ENCODE measurements at regions of chr1 and their contacts with region 1.

Region 1: GRCh38 chr1:234722904-234723720 is 113.1 kb upstream of the IRF2BP2 start:
- DNase-seq: peak in 30 of 35 experiments; percentile 11 to 67 (median 32)
- ATAC-seq: peak; percentile 0 to 40 (median 36)
- H3K4me3 ChIP-seq: peak overlapping the region; percentile 7 to 23
- H3K4me3 Mint-ChIP-seq: peak overlapping the region; percentile 67 to 76 (median 68)
- H3K27ac ChIP-seq: peak overlapping the region; percentile 98
- H3K27ac Mint-ChIP-seq: peak overlapping the region; percentile 92 to 97
- H3K4me1 ChIP-seq: peaks cover 24 to 54% of the 10 kb centered on the region in 2 experiments
- H3K4me1 Mint-ChIP-seq: peaks cover 68 to 81% (median 70%) of the 10 kb centered on the region in 3 donors
- H3K27me3 ChIP-seq: no peaks in the 10 kb centered on the region
- H3K27me3 Mint-ChIP-seq: no peaks in the 10 kb centered on the region

Region 2: GRCh38 chr1:234599617-234600417 is 123.3 kb before region 1 on chr1:
- CTCF ChIA-PET with region 1: interaction called in 1 of 2 experiments, 12 read pairs
- POLR2A ChIA-PET with region 1: interaction called, 9 to 17 read pairs
- DNase-seq: peak; percentile 35 to 88 (median 73)
- ATAC-seq: peak; percentile 65 to 78 (median 76)
- H3K4me3 ChIP-seq: peak overlapping the region; percentile 53 to 62
- H3K4me3 Mint-ChIP-seq: peak overlapping the region; percentile 82 to 94 (median 88)
- H3K27ac ChIP-seq: peak overlapping the region; percentile 96
- H3K27ac Mint-ChIP-seq: peak overlapping the region; percentile 91 to 93
- H3K4me1 ChIP-seq: peaks cover 38 to 53% of the 10 kb centered on the region in 2 experiments
- H3K4me1 Mint-ChIP-seq: peaks cover 45 to 60% (median 60%) of the 10 kb centered on the region in 3 donors
- H3K27me3 ChIP-seq: no peaks in the 10 kb centered on the region
- H3K27me3 Mint-ChIP-seq: no peaks in the 10 kb centered on the region

Region 3: DNA sequence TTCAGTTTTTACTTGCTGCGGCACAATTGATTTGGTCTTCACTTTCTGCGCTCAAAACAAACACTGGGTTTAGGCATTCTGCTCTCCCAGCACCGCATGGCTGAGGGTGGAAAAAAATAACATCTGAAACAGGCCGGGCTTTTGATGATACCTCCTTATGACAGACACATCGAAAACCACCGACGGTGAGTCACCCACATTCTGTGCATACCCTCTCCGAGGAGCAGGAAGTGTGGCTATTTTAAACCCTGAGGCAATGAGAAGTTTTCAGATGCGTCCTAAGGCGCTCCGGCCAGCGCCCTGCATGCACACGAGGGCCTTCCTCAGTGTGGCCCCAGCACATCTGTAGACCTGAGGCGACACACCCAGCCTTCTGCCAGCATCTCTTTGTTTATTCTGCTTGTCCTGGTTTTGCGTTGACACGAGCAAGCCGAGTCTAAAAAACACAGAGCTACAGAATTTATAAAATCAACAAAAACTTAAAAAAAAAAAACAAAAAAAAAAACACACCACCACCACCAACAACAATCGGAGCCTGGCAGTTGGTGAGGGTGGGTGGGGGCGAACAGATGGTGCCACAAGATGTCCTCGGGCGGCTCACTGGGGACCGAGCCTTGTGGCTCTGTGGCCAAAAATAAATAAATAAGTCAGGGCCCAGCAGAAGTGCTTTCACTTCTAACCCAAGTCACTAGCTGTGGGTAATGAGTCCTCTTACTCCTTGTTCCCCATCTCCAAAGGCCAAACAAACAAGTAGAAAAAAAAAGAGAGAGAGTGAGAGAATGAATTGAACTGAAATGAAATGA is 49.4 kb after region 1 on chr1:
- CTCF ChIA-PET with region 1: no interaction called
- POLR2A ChIA-PET with region 1: interaction called in 1 of 2 experiments, 21 read pairs
- DNase-seq: peak; percentile 60 to 91 (median 79)
- ATAC-seq: peak; percentile 87 to 93 (median 92)
- H3K4me3 ChIP-seq: peak overlapping the region in 1 of 2 donors; percentile 34
- H3K4me3 Mint-ChIP-seq: peak overlapping the region; percentile 64 to 74 (median 65)
- H3K27ac ChIP-seq: peak overlapping the region; percentile 88
- H3K27ac Mint-ChIP-seq: peak overlapping the region; percentile 91 to 94
- H3K4me1 ChIP-seq: peaks cover 45 to 59% of the 10 kb centered on the region in 2 experiments
- H3K4me1 Mint-ChIP-seq: peaks cover 56 to 58% (median 57%) of the 10 kb centered on the region in 3 donors
- H3K27me3 ChIP-seq: peaks cover 0 to 12% of the 10 kb centered on the region in 2 experiments
- H3K27me3 Mint-ChIP-seq: no peaks in the 10 kb centered on the region

Region 4: GRCh38 chr1:235011599-235012435 is 288.7 kb after region 1 on chr1:
- CTCF ChIA-PET with region 1: interaction called in 1 of 2 experiments, 5 read pairs
- POLR2A ChIA-PET with region 1: interaction called, 3 to 23 read pairs
- DNase-seq: peak; percentile 68 to 98 (median 94)
- ATAC-seq: peak; percentile 91 to 96 (median 94)
- H3K4me3 ChIP-seq: peak overlapping the region; percentile 42 to 48
- H3K4me3 Mint-ChIP-seq: peak overlapping the region; percentile 55 to 79 (median 61)
- H3K27ac ChIP-seq: peak overlapping the region; percentile 96
- H3K27ac Mint-ChIP-seq: peak overlapping the region; percentile 87 to 95
- H3K4me1 ChIP-seq: peaks cover 18 to 37% of the 10 kb centered on the region in 2 experiments
- H3K4me1 Mint-ChIP-seq: peaks cover 69 to 80% (median 71%) of the 10 kb centered on the region in 3 donors
- H3K27me3 ChIP-seq: no peaks in the 10 kb centered on the region
- H3K27me3 Mint-ChIP-seq: no peaks in the 10 kb centered on the region

Region 5: DNA sequence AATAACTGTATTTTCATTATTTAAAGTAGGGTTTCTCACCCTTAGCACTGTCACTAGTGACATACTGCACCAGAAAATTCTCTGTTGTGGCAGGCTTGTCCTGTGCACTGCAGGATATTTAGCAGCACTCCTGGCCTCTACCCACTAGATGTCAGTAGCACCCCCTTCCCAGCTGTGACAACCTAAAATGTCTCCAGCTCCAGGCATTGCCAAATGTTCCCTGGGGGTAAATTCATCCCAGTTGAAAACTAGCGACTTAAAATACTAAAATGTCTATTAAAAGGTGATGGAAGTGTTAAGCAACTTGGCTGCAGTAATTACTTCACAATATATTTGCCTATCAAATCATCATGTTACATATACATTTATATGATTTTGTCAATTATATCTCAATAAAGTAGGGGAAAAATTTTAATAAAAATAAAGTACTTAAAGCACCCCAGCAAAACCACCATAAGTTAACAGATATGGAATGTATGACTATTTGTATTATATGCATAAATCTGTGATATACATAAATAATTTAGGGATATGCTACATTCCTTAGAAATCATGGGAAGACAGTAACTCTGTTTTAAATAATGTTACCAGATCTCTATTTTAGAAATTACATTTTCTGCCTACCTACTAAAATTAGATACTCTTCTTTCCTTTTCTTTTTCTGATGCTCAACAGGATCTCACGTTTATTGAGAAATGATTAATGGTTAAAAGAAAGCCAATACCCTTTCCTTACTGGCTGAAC is 530.3 kb after region 1 on chr1:
- CTCF ChIA-PET with region 1: interaction called in 1 of 2 experiments, 3 read pairs
- POLR2A ChIA-PET with region 1: interaction called in 1 of 2 experiments, 16 read pairs
- DNase-seq: peak; percentile 28 to 82 (median 56)
- ATAC-seq: peak; percentile 89 to 96 (median 95)
- H3K4me3 ChIP-seq: no peak overlapping the region
- H3K4me3 Mint-ChIP-seq: no peak overlapping the region
- H3K27ac ChIP-seq: no peak overlapping the region
- H3K27ac Mint-ChIP-seq: peak overlapping the region; percentile 28 to 52
- H3K4me1 ChIP-seq: peaks cover 0 to 4% of the 10 kb centered on the region in 2 experiments
- H3K4me1 Mint-ChIP-seq: peaks cover 35 to 44% (median 36%) of the 10 kb centered on the region in 3 donors
- H3K27me3 ChIP-seq: no peaks in the 10 kb centered on the region
- H3K27me3 Mint-ChIP-seq: no peaks in the 10 kb centered on the region

Measured in T-cell (primary cell).